ENCODE measurements at regions of chr10 and their contacts with region 1.

Region 1: DNA sequence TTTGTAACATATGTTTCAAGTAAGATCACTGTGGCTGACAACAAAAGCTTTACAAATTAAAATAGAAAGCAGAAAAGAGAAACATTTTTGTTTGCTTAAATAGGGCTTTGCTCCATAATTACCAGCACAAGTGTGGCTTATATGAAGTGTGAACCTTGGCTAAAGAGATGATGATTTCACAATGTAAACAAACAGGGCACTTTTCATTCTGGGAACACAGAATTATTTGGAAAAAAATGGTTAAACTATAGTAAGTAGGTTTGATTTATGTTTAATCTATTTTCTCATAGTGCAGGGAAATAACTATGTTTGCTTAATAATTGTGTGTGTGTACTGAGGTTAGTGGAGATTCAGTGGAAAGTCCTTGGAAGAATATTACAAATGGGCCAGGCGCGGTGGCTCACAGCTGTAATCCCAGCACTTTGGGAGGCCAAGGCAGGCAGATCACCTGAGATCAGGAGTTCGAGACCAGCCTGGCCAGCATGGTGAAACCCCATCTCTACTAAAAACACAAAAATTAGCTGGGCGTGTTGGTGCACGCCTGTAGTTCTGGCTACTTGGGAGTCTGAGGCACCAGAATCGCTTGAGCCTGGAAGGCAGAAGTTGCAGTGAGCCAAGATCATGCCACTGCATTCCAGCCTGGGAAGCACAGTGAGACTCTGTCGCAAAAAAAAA is 19.1 kb upstream of the OTUD1 start:
- DNase-seq: no peak
- H3K27ac ChIP-seq: peak overlapping the region; percentile 41
- CTCF ChIP-seq: no peak

Region 2: DNA sequence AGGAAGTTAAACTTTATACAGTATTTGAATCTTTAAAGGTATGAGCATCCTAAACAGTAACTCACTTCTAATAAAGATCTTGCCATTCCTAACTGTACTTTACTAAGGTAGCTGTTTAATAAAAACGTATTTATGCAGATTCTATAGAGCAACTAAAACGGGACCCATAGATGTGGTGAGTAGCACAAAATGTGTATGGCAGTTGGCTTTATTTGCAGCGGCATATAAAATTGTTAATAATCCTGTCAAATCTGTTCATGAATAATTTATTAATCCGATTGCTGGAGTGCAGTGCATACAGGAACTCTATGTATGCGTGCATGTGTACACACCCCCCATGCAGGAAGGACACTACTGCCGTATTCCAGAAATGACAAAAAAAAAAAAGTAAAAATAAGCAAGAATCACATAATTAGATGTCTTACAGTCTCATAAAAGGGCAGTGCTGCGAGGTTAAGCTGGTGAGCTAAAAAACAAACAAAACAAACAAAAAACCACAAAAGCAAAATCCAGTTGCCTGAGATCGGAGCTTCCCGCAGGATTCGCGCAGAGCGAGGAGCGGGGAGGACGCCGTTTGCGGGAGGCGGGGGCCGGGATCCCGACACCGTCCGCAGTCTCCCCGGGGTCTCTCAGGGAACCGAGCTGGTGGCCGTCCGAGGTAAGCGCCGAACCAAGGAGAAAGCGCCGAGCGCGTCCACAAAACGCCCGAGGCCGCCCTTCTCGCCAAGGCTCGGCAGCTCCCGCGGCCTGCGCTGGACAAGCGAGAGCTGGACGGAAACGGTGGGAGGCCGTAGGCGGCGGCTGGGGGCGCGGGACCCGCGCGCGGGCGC is 1104.1 kb before region 1 on chr10:
- CTCF ChIA-PET with region 1: no interaction called
- POLR2A ChIA-PET with region 1: interaction called, 10 read pairs
- DNase-seq: peak; percentile 36
- H3K27ac ChIP-seq: peak overlapping the region; percentile 96
- CTCF ChIP-seq: no peak

Region 3: DNA sequence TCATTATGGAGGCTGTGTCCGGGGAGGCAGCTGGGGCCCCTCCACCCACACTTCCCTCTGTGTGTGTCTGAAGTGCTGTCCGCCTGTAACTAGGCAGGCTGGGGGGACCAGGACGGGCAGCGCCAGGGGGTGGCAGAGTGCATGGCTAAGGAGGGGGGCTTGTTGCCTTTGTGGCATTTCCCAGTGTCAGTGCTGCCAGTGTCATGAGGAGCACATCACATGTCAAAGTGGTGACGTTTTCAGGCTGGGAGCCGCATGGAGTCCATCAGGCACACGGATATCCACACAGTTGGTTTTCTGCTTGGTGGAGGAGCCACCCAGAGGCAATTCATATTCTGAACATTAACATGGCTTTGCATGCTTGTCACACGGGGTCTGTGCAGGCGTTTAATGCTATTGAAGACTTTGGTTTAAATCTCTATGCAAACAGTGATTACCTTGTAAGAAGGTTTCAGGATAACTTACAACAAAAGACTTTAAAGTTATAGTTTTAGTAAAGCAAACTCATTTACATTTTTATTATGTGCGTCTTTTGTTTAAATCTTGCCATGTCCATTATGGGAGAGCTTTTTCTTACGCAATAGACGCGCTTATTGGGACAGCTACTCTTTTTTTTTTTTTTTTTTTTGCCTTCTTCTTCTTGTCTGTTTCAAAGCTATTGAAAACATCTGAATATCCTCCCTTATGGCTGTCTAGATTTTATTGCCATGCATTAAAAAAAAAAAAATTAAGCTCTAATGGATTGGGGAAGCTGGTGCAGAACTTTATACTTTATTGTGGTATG is 128.0 kb before region 1 on chr10:
- CTCF ChIA-PET with region 1: no interaction called
- POLR2A ChIA-PET with region 1: no interaction called
- DNase-seq: no peak
- H3K27ac ChIP-seq: no peak overlapping the region
- CTCF ChIP-seq: no peak

Region 4: GRCh38 chr10:23341004-23341403 is 78.8 kb before region 1 on chr10:
- CTCF ChIA-PET with region 1: interaction called, 11 read pairs
- POLR2A ChIA-PET with region 1: no interaction called
- DNase-seq: no peak
- H3K27ac ChIP-seq: no peak overlapping the region
- CTCF ChIP-seq: no peak

Measured in RWPE1 (cell line).